ENCODE measurements at regions of chr4 and their contacts with region 1.

Region 1: GRCh38 chr4:102620697-102621497 is 119.7 kb downstream of the NFKB1 start:
- DNase-seq: no peak
- ATAC-seq: peak; percentile 70
- H3K4me3 ChIP-seq: no peak overlapping the region
- H3K27ac ChIP-seq: no peak overlapping the region
- H3K4me1 ChIP-seq: peaks cover 3% of the 10 kb centered on the region; the same call in 1 of the 2 replicates
- H3K27me3 ChIP-seq: no peaks in the 10 kb centered on the region
- CTCF ChIP-seq: peak; percentile 30 to 51 (median 45); a peak in 5 of 6 replicates
- EP300 ChIP-seq: no peak
- POLR2A ChIP-seq: no peak
- RAD21 ChIP-seq: peak; percentile 78

Region 2: DNA sequence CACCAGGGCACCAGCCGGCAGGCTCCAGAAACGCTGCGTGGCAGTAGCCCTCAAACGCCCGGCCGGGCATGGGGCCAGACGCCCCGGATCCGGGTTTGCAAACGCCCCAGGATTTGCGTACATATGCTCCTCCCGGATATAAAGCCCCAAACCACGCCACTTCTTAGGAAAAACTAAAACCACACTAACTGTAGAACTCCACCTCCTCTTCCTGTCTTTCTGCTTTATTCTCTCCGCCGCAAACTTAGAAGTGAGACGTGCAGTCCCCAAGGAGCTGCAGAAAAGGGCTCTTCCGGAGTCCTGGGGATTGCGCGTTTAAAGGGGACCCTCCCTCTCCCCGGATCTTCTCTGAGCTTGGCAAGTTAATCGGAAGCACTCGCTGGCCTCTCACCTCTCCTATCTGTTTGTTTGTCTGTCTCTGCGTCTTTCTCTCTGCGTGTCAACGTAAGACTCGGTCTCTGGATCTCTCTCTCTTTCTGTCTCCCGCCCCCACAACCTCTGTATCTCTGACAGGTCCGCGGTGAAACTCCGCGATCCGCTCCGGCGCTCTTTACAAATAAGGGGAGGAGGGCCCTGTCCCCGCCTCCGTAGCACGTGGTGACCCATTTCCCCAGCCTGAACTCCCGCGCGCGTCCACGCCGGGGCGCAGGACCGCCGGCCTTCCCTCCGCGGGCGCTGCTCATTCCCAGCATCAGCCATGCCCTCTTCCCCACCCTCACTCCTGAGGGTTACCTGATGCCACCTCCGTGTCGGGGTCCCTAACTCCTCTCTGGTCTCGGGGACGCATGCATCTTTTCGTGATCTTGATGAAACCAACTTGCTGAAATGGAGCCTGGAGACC is 275.7 kb before region 1 on chr4 and contains the start of gene SLC39A8:
- CTCF ChIA-PET with region 1: interaction called, 3 read pairs
- POLR2A ChIA-PET with region 1: no interaction called
- RAD21 ChIA-PET with region 1: no interaction called
- SMC1A ChIA-PET with region 1: no interaction called
- in situ Hi-C with region 1: no loop called
- intact Hi-C with region 1: loop called (anchors 10 kb)
- DNase-seq: peak; percentile 91
- ATAC-seq: peak; percentile 87
- H3K4me3 ChIP-seq: peak within 1 kb of the TSS; percentile 72
- H3K27ac ChIP-seq: peak within 1 kb of the TSS; percentile 87
- H3K4me1 ChIP-seq: peaks cover 11% of the 10 kb centered on the region
- H3K27me3 ChIP-seq: no peaks in the 10 kb centered on the region
- CTCF ChIP-seq: peak; percentile 84 to 87 (median 86)
- EP300 ChIP-seq: peak; percentile 42 to 69; a peak in 3 of 4 replicates
- POLR2A ChIP-seq: peak; percentile 66
- RAD21 ChIP-seq: peak; percentile 54
- polyA plus RNA-seq, gene SLC39A8: 7.9 to 16.6 TPM

Region 3: GRCh38 chr4:102449751-102450352 is 171.0 kb before region 1 on chr4:
- CTCF ChIA-PET with region 1: interaction called, 34 read pairs
- POLR2A ChIA-PET with region 1: no interaction called
- RAD21 ChIA-PET with region 1: interaction called, 13 read pairs
- SMC1A ChIA-PET with region 1: interaction called, 39 read pairs
- in situ Hi-C with region 1: loop called (anchors 5 kb)
- intact Hi-C with region 1: loop called (anchors 1 kb)
- DNase-seq: peak; percentile 45
- ATAC-seq: peak; percentile 94
- H3K4me3 ChIP-seq: no peak overlapping the region
- H3K27ac ChIP-seq: no peak overlapping the region
- H3K4me1 ChIP-seq: no peaks in the 10 kb centered on the region
- H3K27me3 ChIP-seq: no peaks in the 10 kb centered on the region
- CTCF ChIP-seq: peak; percentile 60 to 85 (median 63); a peak in 5 of 6 replicates
- EP300 ChIP-seq: no peak
- POLR2A ChIP-seq: no peak
- RAD21 ChIP-seq: peak; percentile 98

Region 4: GRCh38 chr4:102792361-102792936 is 171.6 kb after region 1 on chr4:
- CTCF ChIA-PET with region 1: no interaction called
- POLR2A ChIA-PET with region 1: no interaction called
- RAD21 ChIA-PET with region 1: no interaction called
- SMC1A ChIA-PET with region 1: interaction called, 7 read pairs
- in situ Hi-C with region 1: no loop called
- intact Hi-C with region 1: loop called (anchors 10 kb)
- DNase-seq: no peak
- ATAC-seq: peak; percentile 17
- H3K4me3 ChIP-seq: no peak overlapping the region
- H3K27ac ChIP-seq: no peak overlapping the region
- H3K4me1 ChIP-seq: no peaks in the 10 kb centered on the region
- H3K27me3 ChIP-seq: no peaks in the 10 kb centered on the region
- CTCF ChIP-seq: no peak
- EP300 ChIP-seq: no peak
- POLR2A ChIP-seq: no peak
- RAD21 ChIP-seq: no peak

Region 5: DNA sequence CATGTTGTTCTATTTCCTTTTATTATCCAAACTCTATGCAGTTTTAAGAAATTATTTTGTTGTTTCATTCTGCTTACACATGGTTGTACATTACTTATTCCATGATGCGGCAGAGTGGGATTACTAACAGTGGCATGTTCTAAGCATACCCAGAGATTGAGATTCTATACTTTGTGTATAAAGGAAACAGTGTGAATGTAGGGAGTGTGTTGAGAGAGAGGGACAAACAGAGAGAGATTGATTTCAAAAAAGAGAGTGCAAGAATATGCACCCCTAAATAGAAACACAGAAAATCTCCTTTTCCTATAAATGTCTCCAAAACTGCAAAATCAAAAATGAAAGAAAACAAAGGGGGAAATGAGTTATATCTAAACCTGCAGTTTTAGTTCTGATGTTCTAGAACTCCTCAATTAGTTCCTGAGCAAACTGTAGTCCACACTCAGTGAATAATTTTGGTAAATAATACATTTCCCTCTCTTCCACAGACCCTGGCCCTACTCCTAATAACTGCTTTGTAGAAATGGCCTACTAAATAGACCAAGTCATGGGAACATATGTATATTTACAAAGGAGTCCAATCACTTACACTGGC is 367.6 kb after region 1 on chr4:
- CTCF ChIA-PET with region 1: no interaction called
- POLR2A ChIA-PET with region 1: no interaction called
- RAD21 ChIA-PET with region 1: no interaction called
- SMC1A ChIA-PET with region 1: no interaction called
- in situ Hi-C with region 1: no loop called
- intact Hi-C with region 1: no loop called
- DNase-seq: no peak
- ATAC-seq: no peak; the same call in 2 of the 3 replicates
- H3K4me3 ChIP-seq: no peak overlapping the region
- H3K27ac ChIP-seq: peak overlapping the region; percentile 46
- H3K4me1 ChIP-seq: peaks cover 6% of the 10 kb centered on the region; the same call in 1 of the 2 replicates
- H3K27me3 ChIP-seq: no peaks in the 10 kb centered on the region
- CTCF ChIP-seq: no peak
- EP300 ChIP-seq: no peak
- POLR2A ChIP-seq: no peak
- RAD21 ChIP-seq: no peak

Region 6: GRCh38 chr4:103099691-103100392 is 478.9 kb after region 1 on chr4 and contains the start of gene BDH2:
- CTCF ChIA-PET with region 1: interaction called, 57 read pairs
- POLR2A ChIA-PET with region 1: no interaction called
- RAD21 ChIA-PET with region 1: interaction called, 12 read pairs
- SMC1A ChIA-PET with region 1: interaction called, 11 read pairs
- in situ Hi-C with region 1: loop called (anchors 10 kb)
- intact Hi-C with region 1: no loop called
- DNase-seq: peak; percentile 72
- ATAC-seq: peak; percentile 97
- H3K4me3 ChIP-seq: peak within 1 kb of the TSS; percentile 74
- H3K27ac ChIP-seq: peak within 1 kb of the TSS; percentile 57; the same call in 1 of the 2 replicates
- H3K4me1 ChIP-seq: peaks cover 4% of the 10 kb centered on the region; the same call in 1 of the 2 replicates
- H3K27me3 ChIP-seq: no peaks in the 10 kb centered on the region
- CTCF ChIP-seq: peak; percentile 57 to 86 (median 71); a peak in 5 of 6 replicates
- EP300 ChIP-seq: no peak
- POLR2A ChIP-seq: 0 out of 2 replicates have a peak, but pooled peaks have one; percentile 35
- RAD21 ChIP-seq: peak; percentile 81
- polyA plus RNA-seq, gene BDH2: 41.0 to 47.3 TPM